ENCODE measurements at regions of chr16 and their contacts with region 1.

Region 1: GRCh38 chr16:29700253-29700987 is 21.4 kb downstream of the QPRT start:
- DNase-seq: peak; percentile 92

Region 2: GRCh38 chr16:29757950-29758466 is 57.6 kb after region 1 on chr16:
- intact Hi-C with region 1: no loop called
- DNase-seq: no peak

Region 3: GRCh38 chr16:30024451-30024850 is 324.0 kb after region 1 on chr16:
- intact Hi-C with region 1: loop called (anchors 5 kb)
- DNase-seq: no peak